ENCODE measurements at regions of chr3 and their contacts with region 1.

Region 1: DNA sequence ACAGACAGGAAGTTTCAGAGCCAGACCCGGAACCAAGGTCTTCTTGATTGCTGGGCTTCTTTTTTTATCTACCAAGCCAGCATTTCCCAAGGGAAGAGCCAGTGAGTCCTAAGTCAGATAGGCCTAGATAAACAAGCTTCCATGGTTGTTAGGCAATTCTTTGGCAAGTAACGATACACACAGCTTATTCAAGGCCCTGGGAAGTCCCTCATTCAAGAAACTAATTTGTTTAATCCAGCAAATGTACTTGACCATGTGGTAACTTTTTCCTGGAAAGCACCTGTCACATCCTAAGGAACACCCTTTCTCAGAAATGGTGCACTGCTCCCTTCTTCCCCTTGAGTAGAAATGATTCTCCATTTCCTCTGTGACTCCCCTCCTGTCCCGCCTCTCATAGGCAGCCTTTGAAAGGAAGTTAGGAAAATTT is 209.9 kb downstream of the ITPR1 start:
- DNase-seq: peak in 1 of 2 donors; percentile 16
- H3K4me3 ChIP-seq: no peak overlapping the region
- H3K27ac ChIP-seq: peak overlapping the region in 3 of 5 donors; percentile 2 to 53 (median 10)
- H3K4me1 ChIP-seq: peaks cover 0 to 7% (median 2%) of the 10 kb centered on the region in 4 donors
- H3K27me3 ChIP-seq: no peaks in the 10 kb centered on the region
- CTCF ChIP-seq: no peak
- EP300 ChIP-seq: no peak
- POLR2A ChIP-seq: no peak

Region 2: GRCh38 chr3:4512895-4513616 is 190.0 kb before region 1 on chr3:
- intact Hi-C with region 1: no loop called
- DNase-seq: peak in 1 of 2 donors; percentile 46
- H3K4me3 ChIP-seq: no peak overlapping the region
- H3K27ac ChIP-seq: peak overlapping the region in 1 of 5 donors; percentile 9
- H3K4me1 ChIP-seq: peaks cover 0 to 51% (median 26%) of the 10 kb centered on the region in 4 donors
- H3K27me3 ChIP-seq: no peaks in the 10 kb centered on the region
- CTCF ChIP-seq: no peak
- EP300 ChIP-seq: no peak
- POLR2A ChIP-seq: no peak

Region 3: DNA sequence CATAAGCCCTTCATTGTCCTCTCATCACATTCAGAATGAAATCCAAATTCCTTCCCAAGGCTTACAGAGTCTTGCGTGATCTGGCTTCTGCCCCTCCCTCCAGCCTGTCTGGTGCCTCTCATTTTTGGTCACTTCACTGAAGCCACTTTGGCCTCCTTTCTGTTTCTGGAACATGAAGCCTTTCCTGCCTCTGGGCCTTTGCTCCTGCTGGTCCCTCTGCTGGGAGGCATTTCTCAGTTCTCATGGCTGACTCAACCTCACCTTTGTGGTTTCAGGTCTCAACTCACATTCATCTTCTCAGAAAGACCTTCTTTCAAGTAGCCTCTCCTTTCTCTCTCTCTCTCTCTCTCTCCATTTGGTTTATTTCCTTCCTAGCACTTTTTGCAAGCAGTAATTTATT is 232.3 kb after region 1 on chr3:
- intact Hi-C with region 1: no loop called
- DNase-seq: no peak
- H3K4me3 ChIP-seq: no peak overlapping the region
- H3K27ac ChIP-seq: no peak overlapping the region
- H3K4me1 ChIP-seq: no peaks in the 10 kb centered on the region
- H3K27me3 ChIP-seq: no peaks in the 10 kb centered on the region
- CTCF ChIP-seq: no peak
- EP300 ChIP-seq: no peak
- POLR2A ChIP-seq: no peak

Region 4: GRCh38 chr3:5057857-5058324 is 354.8 kb after region 1 on chr3:
- intact Hi-C with region 1: loop called (anchors 10 kb)
- DNase-seq: peak; percentile 78 to 93
- H3K4me3 ChIP-seq: no peak overlapping the region
- H3K27ac ChIP-seq: no peak overlapping the region
- H3K4me1 ChIP-seq: peaks cover 0 to 21% (median 4%) of the 10 kb centered on the region in 4 donors
- H3K27me3 ChIP-seq: no peaks in the 10 kb centered on the region
- CTCF ChIP-seq: peak in 5 of 7 experiments; percentile 47 to 85 (median 75)
- EP300 ChIP-seq: no peak
- POLR2A ChIP-seq: no peak

Measured in stomach (tissue), 19 donors.